Heart right ventricle (tissue), 16 donors: ENCODE measurements at regions of chr16 and their contacts with region 1.

Region 1: GRCh38 chr16:67987460-67988160 is 7.3 kb upstream of the DPEP3 start:
- DNase-seq: peak in 1 of 2 donors; percentile 55
- ATAC-seq: peak; percentile 52 to 74 (median 62)
- H3K4me3 ChIP-seq: no peak overlapping the region
- H3K27ac ChIP-seq: peak overlapping the region in 9 of 10 donors; percentile 7 to 77 (median 68)
- H3K4me1 ChIP-seq: peaks cover 3 to 54% (median 38%) of the 10 kb centered on the region in 9 donors
- H3K27me3 ChIP-seq: no peaks in the 10 kb centered on the region
- CTCF ChIP-seq: no peak

Region 2: GRCh38 chr16:67928561-67929364 is 58.8 kb before region 1 on chr16:
- intact Hi-C with region 1: no loop called
- DNase-seq: peak; percentile 67 to 78
- ATAC-seq: peak; percentile 51 to 77 (median 67)
- H3K4me3 ChIP-seq: no peak overlapping the region
- H3K27ac ChIP-seq: peak overlapping the region in 1 of 10 donors; percentile 4
- H3K4me1 ChIP-seq: peaks cover 0 to 39% (median 20%) of the 10 kb centered on the region in 9 donors
- H3K27me3 ChIP-seq: no peaks in the 10 kb centered on the region
- CTCF ChIP-seq: peak; percentile 69 to 91 (median 85)

Region 3: DNA sequence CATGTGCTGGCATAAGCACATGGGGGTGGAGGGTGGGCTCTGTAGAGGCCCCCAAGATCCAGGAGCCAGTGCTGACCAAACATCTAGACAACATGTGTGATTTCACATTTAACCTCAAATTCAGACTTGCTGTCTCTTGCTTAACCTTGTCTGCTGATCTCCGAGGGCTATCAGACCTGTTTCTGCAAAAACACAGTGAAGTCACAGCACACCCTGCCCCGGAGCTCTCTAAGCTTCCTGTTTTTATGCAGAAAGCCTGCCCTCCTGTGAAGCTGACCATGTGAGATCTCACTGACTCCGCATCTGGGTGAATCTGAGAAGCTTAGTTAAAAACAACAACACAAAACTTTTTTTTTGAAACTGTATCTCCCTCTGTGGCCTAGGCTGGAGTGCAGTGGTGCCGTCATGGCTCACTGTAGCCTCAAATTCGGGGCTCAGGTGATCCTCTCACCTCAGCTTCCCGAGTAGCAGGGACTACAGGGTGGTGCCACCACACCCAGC is 18.2 kb after region 1 on chr16:
- intact Hi-C with region 1: no loop called
- DNase-seq: peak in 1 of 2 donors; percentile 33
- ATAC-seq: peak in 7 of 8 donors; percentile 50 to 86 (median 71)
- H3K4me3 ChIP-seq: no peak overlapping the region
- H3K27ac ChIP-seq: peak overlapping the region in 6 of 10 donors; percentile 19 to 93 (median 42)
- H3K4me1 ChIP-seq: peaks cover 0 to 40% (median 0%) of the 10 kb centered on the region in 9 donors
- H3K27me3 ChIP-seq: no peaks in the 10 kb centered on the region
- CTCF ChIP-seq: no peak

Region 4: DNA sequence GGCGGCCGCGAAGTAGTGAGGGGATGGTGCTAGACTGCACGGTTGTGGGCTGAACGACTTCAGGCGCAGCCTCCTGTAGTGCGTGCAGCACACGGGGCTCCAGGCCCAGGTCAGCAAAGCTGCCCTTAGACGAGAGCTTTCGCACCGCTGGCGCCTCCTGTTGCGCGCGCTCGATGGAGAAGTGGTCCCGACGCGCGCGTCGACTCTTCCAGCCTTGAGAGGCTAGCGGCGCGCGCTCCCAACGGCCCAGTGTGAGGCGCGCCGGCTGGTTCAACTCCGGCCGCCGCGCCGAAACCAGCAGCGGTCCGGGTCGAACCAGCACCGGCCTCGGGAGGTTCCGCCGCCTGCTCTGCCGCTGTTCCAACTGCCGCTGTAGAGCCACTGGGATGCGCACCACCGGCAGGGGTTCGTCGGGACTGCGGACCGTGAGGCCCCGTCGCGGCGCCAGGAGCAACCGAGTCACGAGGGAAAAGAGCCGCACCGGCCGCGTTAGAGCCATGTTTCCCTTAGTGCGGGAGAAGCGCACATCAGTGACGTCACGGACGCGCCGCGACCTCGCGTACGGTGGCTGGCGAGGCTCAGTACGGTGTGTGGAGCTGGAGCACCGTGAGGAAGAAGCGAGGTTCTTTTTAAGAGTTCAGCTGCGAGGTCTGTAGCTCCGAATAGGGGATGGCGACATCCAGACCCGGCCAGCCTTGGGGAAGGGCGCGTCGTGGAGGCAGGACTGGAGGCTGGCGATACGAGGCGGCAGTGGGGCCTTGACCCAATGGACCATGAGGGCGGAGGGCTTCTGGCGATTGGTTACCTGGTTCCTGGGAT is 35.3 kb after region 1 on chr16 and contains the starts of genes DDX28 and DUS2:
- intact Hi-C with region 1: loop called in 1 of 10 experiments (anchors 5 kb)
- DNase-seq: peak; percentile 93 to 94
- ATAC-seq: peak; percentile 96 to 99 (median 98)
- H3K4me3 ChIP-seq: peak within 1 kb of the TSS; percentile 73 to 100 (median 98)
- H3K27ac ChIP-seq: peak within 1 kb of the TSS; percentile 61 to 92 (median 84)
- H3K4me1 ChIP-seq: peaks cover 5 to 33% (median 27%) of the 10 kb centered on the region in 9 donors
- H3K27me3 ChIP-seq: no peaks in the 10 kb centered on the region
- CTCF ChIP-seq: no peak
- total RNA-seq, gene DDX28: 8.4 to 13.1 (median 9.7) TPM
- total RNA-seq, gene DUS2: 4.8 to 13.1 (median 7.2) TPM